Activated T-helper 1 cell treated with anti-CD3 and anti-CD28 coated beads, Interleukin-12 subunit alpha, Interleukin-12 subunit beta, Interleukin-2, Interleukin-4 antibody, amounts not matched to agents 30 ng/mL and 10 ng/mL and 1 ng/mL, durations not matched to agents 14 hours and 24 hours and 36 hours (primary cell): ENCODE measurements at regions of chr4 and their contacts with region 1.

Region 1: GRCh38 chr4:110055158-110055768 is 142.6 kb downstream of the EGF start:
- DNase-seq: peak; percentile 54
- H3K4me3 Mint-ChIP-seq: peak overlapping the region; percentile 66
- H3K27ac Mint-ChIP-seq: peak overlapping the region; percentile 61
- H3K4me1 Mint-ChIP-seq: peaks cover 83% of the 10 kb centered on the region
- H3K27me3 Mint-ChIP-seq: no peaks in the 10 kb centered on the region

Region 2: DNA sequence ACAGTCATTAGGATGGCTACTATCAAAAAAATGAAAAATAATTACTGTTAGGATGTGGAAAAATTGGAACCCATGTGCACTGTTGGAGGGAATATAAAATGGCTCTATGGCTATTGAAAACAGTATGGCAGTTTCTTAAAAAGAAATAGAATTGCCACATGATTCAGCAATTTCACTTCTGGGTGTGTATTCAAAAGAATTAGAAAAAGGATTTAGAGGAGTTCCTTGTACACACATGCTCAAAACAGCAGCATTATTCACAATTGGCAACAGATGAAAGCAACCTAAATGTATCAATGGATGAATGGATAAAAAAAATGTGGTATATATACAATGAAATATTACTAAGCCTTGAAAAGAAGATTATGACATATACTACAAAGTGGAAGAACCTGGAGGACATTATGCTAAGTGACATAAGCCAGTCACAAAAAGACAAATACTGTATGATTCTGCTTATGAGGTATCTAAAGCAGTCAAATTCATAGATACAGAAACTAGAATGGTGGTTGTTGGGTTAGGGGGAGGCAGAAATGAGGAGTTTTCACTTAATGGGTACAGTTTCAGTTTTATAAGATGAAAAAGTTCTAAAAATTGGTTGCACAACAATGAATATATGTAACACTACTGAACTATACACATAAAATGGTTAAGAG is 19.9 kb after region 1 on chr4:
- intact Hi-C with region 1: loop called (anchors 2 kb)
- DNase-seq: no peak
- H3K4me3 Mint-ChIP-seq: no peak overlapping the region
- H3K27ac Mint-ChIP-seq: no peak overlapping the region
- H3K4me1 Mint-ChIP-seq: peaks cover 12% of the 10 kb centered on the region
- H3K27me3 Mint-ChIP-seq: peaks cover 3% of the 10 kb centered on the region

Region 3: DNA sequence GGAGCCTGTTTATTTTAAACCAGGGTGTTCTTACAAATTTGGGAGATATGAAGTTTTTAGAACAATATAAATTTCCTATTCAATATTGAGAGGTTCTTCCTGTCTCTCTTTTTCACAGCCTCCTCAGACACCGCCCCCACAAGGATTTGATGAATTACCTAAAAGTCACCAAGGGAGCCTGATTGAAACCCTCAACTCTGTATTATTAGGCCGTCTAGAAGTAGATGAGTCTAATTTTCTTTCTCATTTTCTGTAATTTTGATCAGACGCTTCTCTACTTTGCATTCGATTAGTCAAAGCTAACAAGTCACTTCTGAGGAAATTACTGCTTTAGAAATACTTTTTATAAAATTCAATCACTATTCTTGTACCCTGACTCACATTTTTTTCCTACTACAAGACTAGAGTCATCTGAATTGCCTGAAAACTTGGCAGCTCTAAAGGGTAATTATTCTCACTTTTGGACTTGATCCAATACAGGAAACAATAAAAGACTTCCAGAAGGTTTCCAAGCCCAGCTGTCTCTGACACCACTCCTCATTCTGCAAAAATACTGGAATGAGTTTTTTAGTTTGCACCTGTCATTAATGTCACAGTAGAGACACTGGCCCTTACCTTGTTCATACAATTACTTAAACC is 31.9 kb after region 1 on chr4:
- intact Hi-C with region 1: loop called (anchors 1 kb)
- DNase-seq: no peak
- H3K4me3 Mint-ChIP-seq: no peak overlapping the region
- H3K27ac Mint-ChIP-seq: peak overlapping the region; percentile 38
- H3K4me1 Mint-ChIP-seq: peaks cover 72% of the 10 kb centered on the region
- H3K27me3 Mint-ChIP-seq: no peaks in the 10 kb centered on the region

Region 4: GRCh38 chr4:110124711-110125110 is 69.4 kb after region 1 on chr4:
- intact Hi-C with region 1: loop called (anchors 2 kb)
- DNase-seq: no peak
- H3K4me3 Mint-ChIP-seq: no peak overlapping the region
- H3K27ac Mint-ChIP-seq: no peak overlapping the region
- H3K4me1 Mint-ChIP-seq: peaks cover 31% of the 10 kb centered on the region
- H3K27me3 Mint-ChIP-seq: no peaks in the 10 kb centered on the region

Region 5: DNA sequence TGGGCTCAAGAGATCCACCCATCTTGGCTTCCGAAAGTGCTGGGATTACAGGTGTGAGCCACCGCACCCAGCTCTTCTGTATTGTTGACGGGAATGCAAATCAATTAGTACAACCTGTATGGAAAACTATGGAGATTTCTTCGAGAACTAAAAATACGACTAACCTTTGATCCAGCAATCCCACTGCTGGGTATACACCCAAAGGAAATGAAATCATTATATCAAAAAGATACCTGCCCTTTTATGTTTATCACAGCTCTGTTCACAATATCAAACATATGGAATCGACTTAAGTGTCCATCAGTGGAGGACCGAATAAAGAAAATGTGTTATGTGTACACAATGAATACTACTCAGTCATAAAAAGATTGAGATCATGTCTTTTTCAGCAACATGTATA is 93.8 kb after region 1 on chr4:
- intact Hi-C with region 1: loop called (anchors 5 kb)
- DNase-seq: no peak
- H3K4me3 Mint-ChIP-seq: no peak overlapping the region
- H3K27ac Mint-ChIP-seq: no peak overlapping the region
- H3K4me1 Mint-ChIP-seq: no peaks in the 10 kb centered on the region
- H3K27me3 Mint-ChIP-seq: no peaks in the 10 kb centered on the region

Region 6: DNA sequence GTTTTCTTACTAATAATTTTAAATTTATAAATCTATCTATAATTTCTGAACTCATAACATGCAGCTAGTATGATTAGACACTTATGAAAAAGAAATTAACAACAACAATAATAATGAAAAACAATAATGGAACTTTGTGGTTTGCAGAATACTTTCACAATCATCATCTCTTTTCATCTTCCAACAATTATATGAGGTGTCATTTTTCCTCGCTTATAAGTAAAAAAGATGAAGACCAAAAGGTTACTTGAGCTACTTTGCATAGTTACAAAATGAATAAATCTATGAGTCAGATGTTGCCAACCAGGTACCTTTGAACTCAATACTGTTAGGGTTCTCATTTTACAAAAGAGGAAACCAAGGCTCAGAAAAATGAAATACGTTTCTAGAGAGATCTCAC is 241.6 kb after region 1 on chr4:
- intact Hi-C with region 1: loop called (anchors 2 kb)
- DNase-seq: no peak
- H3K4me3 Mint-ChIP-seq: no peak overlapping the region
- H3K27ac Mint-ChIP-seq: peak overlapping the region; percentile 20
- H3K4me1 Mint-ChIP-seq: peaks cover 15% of the 10 kb centered on the region
- H3K27me3 Mint-ChIP-seq: peaks cover 17% of the 10 kb centered on the region